K562 (cell line): ENCODE measurements at regions of chr6 and their contacts with region 1.

Region 1: DNA sequence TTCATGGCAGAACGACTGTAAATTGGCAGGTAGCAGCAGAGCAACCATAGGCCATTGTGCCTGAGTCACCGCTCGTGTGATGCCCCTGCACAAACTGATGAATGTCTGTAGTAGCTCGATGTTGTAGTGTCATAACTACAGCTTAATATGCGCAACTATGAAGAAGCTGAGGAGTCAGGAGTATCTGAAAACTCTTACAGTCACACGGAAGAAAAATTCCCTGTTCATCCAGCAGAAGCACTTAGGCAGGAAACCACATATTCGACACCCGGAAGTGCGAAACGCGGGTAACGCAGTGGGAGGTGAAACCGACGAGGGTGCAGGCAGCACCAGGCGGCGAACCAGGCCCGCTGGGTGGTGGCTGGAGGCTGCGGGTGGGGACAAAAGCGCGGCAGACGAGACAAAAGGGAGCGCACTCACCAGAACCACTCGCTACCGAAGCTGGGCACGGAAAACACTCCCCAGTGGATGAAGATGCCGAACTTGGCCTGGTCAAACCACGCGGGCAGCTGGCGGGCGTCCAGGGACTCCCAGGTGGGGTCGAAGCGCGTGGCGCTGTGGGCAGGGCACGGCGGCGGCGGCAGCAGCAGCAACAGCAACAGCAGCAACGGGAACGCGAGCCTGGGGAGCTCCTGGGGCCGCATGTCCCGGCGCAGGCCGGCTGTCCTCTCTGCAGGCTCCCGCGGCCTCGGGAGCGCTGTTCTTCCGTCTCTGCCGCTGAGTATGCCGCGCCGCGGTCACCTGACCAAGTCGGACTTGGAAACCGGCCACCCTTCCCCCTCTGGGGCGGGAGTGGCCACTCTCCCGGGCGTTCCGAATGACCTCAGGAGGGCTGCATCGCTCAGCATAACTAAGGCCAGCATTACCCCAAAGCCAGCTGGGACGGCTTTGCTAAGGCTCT is at the start of gene FUCA2:
- DNase-seq: peak; percentile 92 to 98 (median 93)
- ATAC-seq: peak; percentile 96
- H3K4me3 ChIP-seq: peak within 1 kb of the TSS; percentile 66
- H3K27ac ChIP-seq: peak within 1 kb of the TSS; percentile 91
- H3K4me1 ChIP-seq: peaks cover 10 to 16% of the 10 kb centered on the region in 2 experiments; a peak in 4 of 5 replicates
- H3K27me3 ChIP-seq: no peaks in the 10 kb centered on the region
- CTCF ChIP-seq: peak in 2 of 3 experiments; percentile 6 to 21; a peak in 3 of 6 replicates
- EP300 ChIP-seq: peak; percentile 52
- POLR2A ChIP-seq: peak; percentile 97
- RAD21 ChIP-seq: no peak; a peak in 1 of 4 replicates
- polyA plus RNA-seq, gene FUCA2: 20.6 to 23.9 TPM

Region 2: GRCh38 chr6:143450453-143451371 is 60.5 kb before region 1 on chr6 and contains the starts of genes ADAT2 and PEX3:
- CTCF ChIA-PET with region 1: no interaction called
- POLR2A ChIA-PET with region 1: no interaction called
- in situ Hi-C with region 1: no loop called
- intact Hi-C with region 1: loop called (anchors 2 kb)
- DNase-seq: peak; percentile 88 to 97 (median 91)
- ATAC-seq: peak; percentile 98
- H3K4me3 ChIP-seq: peak within 1 kb of the TSS; percentile 65
- H3K27ac ChIP-seq: peak within 1 kb of the TSS; percentile 78
- H3K4me1 ChIP-seq: peaks cover 0 to 8% of the 10 kb centered on the region in 2 experiments; a peak in 2 of 5 replicates
- H3K27me3 ChIP-seq: no peaks in the 10 kb centered on the region
- CTCF ChIP-seq: peak in 1 of 3 experiments; percentile 13; a peak in 1 of 6 replicates
- EP300 ChIP-seq: peak; percentile 79
- POLR2A ChIP-seq: peak; percentile 96
- RAD21 ChIP-seq: no peak; a peak in 1 of 4 replicates
- polyA plus RNA-seq, gene ADAT2: 13.0 to 18.5 TPM
- polyA plus RNA-seq, gene PEX3: 62.8 to 69.6 TPM

Region 3: GRCh38 chr6:143569040-143569439 is 57.8 kb after region 1 on chr6:
- CTCF ChIA-PET with region 1: no interaction called
- POLR2A ChIA-PET with region 1: no interaction called
- in situ Hi-C with region 1: no loop called
- intact Hi-C with region 1: loop called (anchors 1 kb)
- DNase-seq: no peak
- ATAC-seq: no peak; the same call in 2 of the 3 replicates
- H3K4me3 ChIP-seq: no peak overlapping the region
- H3K27ac ChIP-seq: no peak overlapping the region
- H3K4me1 ChIP-seq: no peaks in the 10 kb centered on the region
- H3K27me3 ChIP-seq: peaks cover 0 to 12% of the 10 kb centered on the region in 2 experiments; a peak in 2 of 5 replicates
- CTCF ChIP-seq: no peak
- EP300 ChIP-seq: no peak
- POLR2A ChIP-seq: no peak
- RAD21 ChIP-seq: no peak

Region 4: GRCh38 chr6:143575440-143575839 is 64.2 kb after region 1 on chr6:
- CTCF ChIA-PET with region 1: no interaction called
- POLR2A ChIA-PET with region 1: no interaction called
- in situ Hi-C with region 1: no loop called
- intact Hi-C with region 1: loop called (anchors 2 kb)
- DNase-seq: peak; percentile 79 to 85 (median 84)
- ATAC-seq: peak; percentile 95
- H3K4me3 ChIP-seq: no peak overlapping the region
- H3K27ac ChIP-seq: no peak overlapping the region
- H3K4me1 ChIP-seq: no peaks in the 10 kb centered on the region
- H3K27me3 ChIP-seq: peaks cover 0 to 3% of the 10 kb centered on the region in 2 experiments; a peak in 1 of 5 replicates
- CTCF ChIP-seq: peak; percentile 86 to 97 (median 94)
- EP300 ChIP-seq: no peak
- POLR2A ChIP-seq: no peak
- RAD21 ChIP-seq: peak; percentile 99

Region 5: GRCh38 chr6:143620447-143620846 is 109.2 kb after region 1 on chr6:
- CTCF ChIA-PET with region 1: no interaction called
- POLR2A ChIA-PET with region 1: interaction called, 3 read pairs
- in situ Hi-C with region 1: no loop called
- intact Hi-C with region 1: loop called (anchors 5 kb)
- DNase-seq: no peak
- ATAC-seq: no peak
- H3K4me3 ChIP-seq: no peak overlapping the region
- H3K27ac ChIP-seq: no peak overlapping the region
- H3K4me1 ChIP-seq: no peaks in the 10 kb centered on the region
- H3K27me3 ChIP-seq: no peaks in the 10 kb centered on the region
- CTCF ChIP-seq: no peak
- EP300 ChIP-seq: no peak
- POLR2A ChIP-seq: no peak
- RAD21 ChIP-seq: no peak

Region 6: DNA sequence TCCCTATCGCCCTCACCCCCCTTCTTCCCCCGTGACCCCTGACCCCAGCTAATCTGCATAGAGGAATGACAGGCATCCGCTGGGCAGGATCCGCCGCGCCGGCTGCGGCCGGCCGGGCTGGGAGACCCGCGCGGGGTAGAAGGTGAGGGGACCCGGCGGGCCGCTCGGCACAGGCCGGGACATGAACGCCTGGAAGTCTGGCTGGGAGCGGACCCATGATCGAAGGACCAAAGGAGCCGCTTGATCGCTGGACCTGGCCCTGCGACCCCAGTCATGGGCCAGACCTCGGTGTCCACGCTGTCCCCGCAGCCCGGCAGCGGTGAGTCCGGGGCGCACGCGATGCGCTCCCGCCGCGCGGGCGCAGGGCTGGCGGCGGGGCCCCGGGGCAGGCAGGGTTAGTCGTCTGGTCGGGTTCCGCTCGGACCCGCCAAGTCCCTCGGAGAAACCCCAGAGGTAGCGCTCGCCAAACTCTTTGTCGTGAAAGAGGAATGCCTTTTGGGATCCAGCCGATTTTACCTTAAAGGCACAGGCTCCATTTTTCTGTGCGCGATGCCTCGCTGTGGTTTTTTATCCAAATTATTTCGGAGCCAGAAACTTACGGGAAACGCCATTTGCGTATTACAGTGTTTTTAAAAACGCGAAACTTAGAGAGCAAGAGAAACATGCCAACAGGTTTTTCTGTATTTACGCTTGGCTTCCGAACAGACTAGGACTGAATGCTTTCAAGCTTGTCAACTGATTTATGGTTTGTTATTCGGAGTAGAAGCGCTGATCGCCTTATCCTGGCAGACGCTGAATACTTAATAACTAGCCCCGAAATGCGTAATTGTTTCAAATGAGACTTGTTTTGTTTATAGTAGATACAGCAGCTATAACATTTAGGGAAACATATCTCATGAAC is 166.9 kb after region 1 on chr6 and contains the start of gene PHACTR2:
- CTCF ChIA-PET with region 1: no interaction called
- POLR2A ChIA-PET with region 1: no interaction called
- in situ Hi-C with region 1: no loop called
- intact Hi-C with region 1: loop called (anchors 2 kb)
- DNase-seq: peak; percentile 74 to 92 (median 82)
- ATAC-seq: peak; percentile 96
- H3K4me3 ChIP-seq: peak within 1 kb of the TSS; percentile 76
- H3K27ac ChIP-seq: peak within 1 kb of the TSS; percentile 75
- H3K4me1 ChIP-seq: peaks cover 5% of the 10 kb centered on the region in 2 experiments; a peak in 2 of 5 replicates
- H3K27me3 ChIP-seq: no peaks in the 10 kb centered on the region
- CTCF ChIP-seq: no peak
- EP300 ChIP-seq: no peak
- POLR2A ChIP-seq: peak; percentile 83
- RAD21 ChIP-seq: peak in 1 of 2 experiments; percentile 25; a peak in 2 of 4 replicates
- polyA plus RNA-seq, gene PHACTR2: 5.3 to 13.9 TPM

Region 7: GRCh38 chr6:143806282-143807102 is 295.3 kb after region 1 on chr6:
- CTCF ChIA-PET with region 1: no interaction called
- POLR2A ChIA-PET with region 1: no interaction called
- in situ Hi-C with region 1: no loop called
- intact Hi-C with region 1: loop called (anchors 5 kb)
- DNase-seq: peak; percentile 76 to 95 (median 85)
- ATAC-seq: peak; percentile 81
- H3K4me3 ChIP-seq: no peak overlapping the region
- H3K27ac ChIP-seq: peak overlapping the region; percentile 84
- H3K4me1 ChIP-seq: peaks cover 47 to 52% of the 10 kb centered on the region in 2 experiments
- H3K27me3 ChIP-seq: no peaks in the 10 kb centered on the region
- CTCF ChIP-seq: no peak
- EP300 ChIP-seq: peak; percentile 95
- POLR2A ChIP-seq: no peak
- RAD21 ChIP-seq: peak; percentile 6 to 20; a peak in 2 of 4 replicates